HCT116 (cell line): ENCODE measurements at regions of chr18 and their contacts with region 1.

Region 1: GRCh38 chr18:74495581-74496507 is at the start of gene CNDP2:
- DNase-seq: peak; percentile 96
- ATAC-seq: peak; percentile 89
- H3K4me3 ChIP-seq: peak within 1 kb of the TSS; percentile 76 to 83
- H3K27ac ChIP-seq: peak within 1 kb of the TSS; percentile 64
- H3K4me1 ChIP-seq: peaks cover 6 to 12% of the 10 kb centered on the region in 2 experiments
- H3K27me3 ChIP-seq: no peaks in the 10 kb centered on the region
- CTCF ChIP-seq: no peak
- POLR2A ChIP-seq: peak; percentile 71
- RAD21 ChIP-seq: no peak
- total RNA-seq, gene CNDP2: 112 TPM

Region 2: DNA sequence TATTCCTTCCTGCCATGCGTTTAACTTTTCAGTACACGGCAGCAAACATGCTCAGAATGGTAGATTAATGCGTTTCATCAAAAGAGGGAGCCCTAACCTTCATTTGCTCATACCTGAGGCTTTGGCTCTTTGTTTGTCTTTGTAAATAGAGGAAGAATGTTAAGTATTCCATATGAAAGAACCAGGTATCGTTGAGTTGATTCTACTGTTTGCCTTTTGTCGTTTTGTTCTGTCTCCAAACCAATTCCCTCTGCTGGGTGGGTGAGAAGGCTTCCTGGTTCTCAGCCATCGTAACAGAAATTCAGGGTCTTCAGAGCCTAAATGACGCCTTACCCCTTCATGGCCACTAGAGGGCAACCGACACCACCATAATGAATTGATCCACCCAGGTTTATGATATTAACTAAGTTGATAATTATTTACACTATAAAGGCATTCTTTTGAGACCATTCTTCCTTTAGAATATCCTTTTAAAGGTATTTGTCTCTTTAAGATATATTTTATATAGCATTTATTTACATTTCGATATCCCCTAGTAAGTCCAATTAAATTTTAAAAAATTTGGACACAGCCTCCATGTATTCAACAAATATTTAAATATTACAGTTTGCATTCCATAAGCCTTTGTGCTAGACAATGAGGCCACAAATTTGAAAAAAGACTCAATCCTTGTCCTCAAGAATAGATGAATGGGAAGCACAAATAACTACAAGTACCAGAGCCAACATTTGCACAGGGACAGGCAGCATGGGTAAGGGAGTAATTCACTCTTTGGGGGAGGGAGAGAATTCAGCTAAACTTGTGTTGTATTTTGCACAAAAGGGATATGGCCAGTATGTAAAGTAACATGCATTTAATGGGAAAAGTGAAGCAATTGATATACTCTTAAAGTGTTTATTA is 299.4 kb before region 1 on chr18:
- CTCF ChIA-PET with region 1: interaction called, 8 read pairs
- POLR2A ChIA-PET with region 1: no interaction called
- RAD21 ChIA-PET with region 1: no interaction called
- intact Hi-C with region 1: loop called (anchors 1 kb)
- DNase-seq: peak; percentile 42
- ATAC-seq: peak; percentile 89
- H3K4me3 ChIP-seq: peak overlapping the region; percentile 27 to 51
- H3K27ac ChIP-seq: no peak overlapping the region
- H3K4me1 ChIP-seq: peaks cover 0 to 4% of the 10 kb centered on the region in 2 experiments; a peak in 1 of 4 replicates
- H3K27me3 ChIP-seq: peaks cover 4% of the 10 kb centered on the region; the same call in 1 of the 2 replicates
- CTCF ChIP-seq: peak; percentile 77 to 96 (median 90)
- POLR2A ChIP-seq: no peak
- RAD21 ChIP-seq: peak; percentile 80

Region 3: DNA sequence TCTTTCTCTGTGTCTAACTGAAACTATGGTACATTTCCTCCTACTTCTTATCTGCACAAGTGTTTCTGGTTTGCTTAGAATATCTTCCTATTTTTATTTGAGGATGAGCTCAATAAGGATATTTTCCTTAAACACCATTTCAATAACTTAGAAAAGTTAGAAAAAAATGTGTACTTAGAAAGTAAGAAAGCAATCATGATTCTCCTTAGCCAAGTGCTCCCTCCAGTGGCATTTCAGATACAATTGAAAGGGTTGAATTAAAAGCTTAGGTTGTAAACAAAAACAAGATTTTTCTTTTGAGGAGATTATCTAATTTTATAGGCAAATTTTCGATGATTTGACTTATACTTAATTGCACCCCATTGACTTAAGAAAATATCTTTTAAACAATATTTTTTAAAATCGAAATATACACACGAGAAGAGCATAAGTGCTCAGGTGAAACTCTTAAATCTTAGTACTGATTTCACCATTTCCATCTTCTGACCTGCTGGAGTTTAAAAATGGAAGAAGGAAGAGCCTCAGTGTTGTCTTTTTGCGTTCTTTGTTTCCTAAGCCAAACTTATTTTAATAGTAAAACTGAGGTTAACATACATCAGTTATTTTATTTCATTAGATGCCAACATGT is 153.3 kb before region 1 on chr18:
- CTCF ChIA-PET with region 1: interaction called, 11 read pairs
- POLR2A ChIA-PET with region 1: no interaction called
- RAD21 ChIA-PET with region 1: interaction called, 3 read pairs
- intact Hi-C with region 1: no loop called
- DNase-seq: peak; percentile 51
- ATAC-seq: peak; percentile 69
- H3K4me3 ChIP-seq: no peak overlapping the region
- H3K27ac ChIP-seq: no peak overlapping the region
- H3K4me1 ChIP-seq: no peaks in the 10 kb centered on the region
- H3K27me3 ChIP-seq: peaks cover 16% of the 10 kb centered on the region
- CTCF ChIP-seq: peak; percentile 34 to 68 (median 66)
- POLR2A ChIP-seq: no peak
- RAD21 ChIP-seq: peak; percentile 77

Region 4: GRCh38 chr18:74551936-74552555 is 56.2 kb after region 1 on chr18:
- CTCF ChIA-PET with region 1: interaction called, 12 read pairs
- POLR2A ChIA-PET with region 1: no interaction called
- RAD21 ChIA-PET with region 1: interaction called in 1 of 2 experiments, 4 read pairs
- intact Hi-C with region 1: no loop called
- DNase-seq: peak; percentile 72
- ATAC-seq: peak; percentile 100
- H3K4me3 ChIP-seq: no peak overlapping the region
- H3K27ac ChIP-seq: no peak overlapping the region
- H3K4me1 ChIP-seq: no peaks in the 10 kb centered on the region
- H3K27me3 ChIP-seq: peaks cover 18% of the 10 kb centered on the region
- CTCF ChIP-seq: peak; percentile 67 to 80 (median 77)
- POLR2A ChIP-seq: no peak
- RAD21 ChIP-seq: peak; percentile 77

Region 5: DNA sequence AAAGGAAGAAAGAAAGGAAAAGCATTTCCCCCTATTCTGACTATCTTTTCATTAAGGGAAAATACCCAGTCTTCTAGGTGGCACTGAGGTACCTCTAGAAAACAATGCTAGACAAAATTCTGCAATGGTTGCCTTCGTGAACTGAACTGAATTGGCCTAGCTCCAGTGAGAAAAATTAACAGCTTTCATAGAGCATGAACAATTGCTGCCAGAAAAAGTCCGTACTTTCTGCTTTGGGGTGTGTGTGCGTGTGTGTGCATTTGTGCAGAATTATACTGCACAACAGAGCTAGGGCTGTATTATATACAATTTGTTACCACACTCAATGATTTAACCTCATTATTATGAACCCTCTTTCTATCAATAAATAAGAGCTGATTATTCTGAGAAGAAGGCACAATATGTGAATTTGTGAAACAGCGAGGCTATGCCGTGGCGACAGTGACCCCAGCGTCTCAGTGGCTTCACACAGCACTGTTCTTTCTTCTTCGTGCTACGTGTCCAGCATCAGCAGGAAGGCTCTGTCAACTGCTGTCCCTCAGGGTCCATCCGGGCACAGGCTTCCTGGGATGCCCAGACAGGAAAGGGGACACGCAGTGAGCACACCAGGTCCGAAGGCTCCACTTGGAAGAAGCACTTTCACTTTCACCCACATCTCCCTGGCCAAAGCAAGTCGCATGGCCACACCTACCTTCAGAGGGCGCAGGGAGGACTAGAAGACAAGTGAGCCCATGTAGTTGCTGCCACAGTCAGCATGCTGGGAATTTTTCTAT is 665.6 kb after region 1 on chr18:
- CTCF ChIA-PET with region 1: no interaction called
- POLR2A ChIA-PET with region 1: no interaction called
- RAD21 ChIA-PET with region 1: no interaction called
- intact Hi-C with region 1: no loop called
- DNase-seq: peak; percentile 32
- ATAC-seq: peak; percentile 90
- H3K4me3 ChIP-seq: peak overlapping the region; percentile 43 to 63
- H3K27ac ChIP-seq: no peak overlapping the region
- H3K4me1 ChIP-seq: peaks cover 0 to 10% of the 10 kb centered on the region in 2 experiments; a peak in 1 of 4 replicates
- H3K27me3 ChIP-seq: no peaks in the 10 kb centered on the region
- CTCF ChIP-seq: no peak
- POLR2A ChIP-seq: no peak
- RAD21 ChIP-seq: no peak; the same call in 1 of the 2 replicates